ENCODE measurements at regions of chr14 and their contacts with region 1.

Region 1: GRCh38 chr14:84465880-84466279 is 1064.1 kb upstream of the FLRT2 start:
- DNase-seq: peak; percentile 51
- H3K4me3 ChIP-seq: no peak overlapping the region
- H3K27ac ChIP-seq: no peak overlapping the region
- H3K4me1 ChIP-seq: no peaks in the 10 kb centered on the region
- H3K27me3 ChIP-seq: no peaks in the 10 kb centered on the region
- CTCF ChIP-seq: no peak
- POLR2A ChIP-seq: no peak

Region 2: DNA sequence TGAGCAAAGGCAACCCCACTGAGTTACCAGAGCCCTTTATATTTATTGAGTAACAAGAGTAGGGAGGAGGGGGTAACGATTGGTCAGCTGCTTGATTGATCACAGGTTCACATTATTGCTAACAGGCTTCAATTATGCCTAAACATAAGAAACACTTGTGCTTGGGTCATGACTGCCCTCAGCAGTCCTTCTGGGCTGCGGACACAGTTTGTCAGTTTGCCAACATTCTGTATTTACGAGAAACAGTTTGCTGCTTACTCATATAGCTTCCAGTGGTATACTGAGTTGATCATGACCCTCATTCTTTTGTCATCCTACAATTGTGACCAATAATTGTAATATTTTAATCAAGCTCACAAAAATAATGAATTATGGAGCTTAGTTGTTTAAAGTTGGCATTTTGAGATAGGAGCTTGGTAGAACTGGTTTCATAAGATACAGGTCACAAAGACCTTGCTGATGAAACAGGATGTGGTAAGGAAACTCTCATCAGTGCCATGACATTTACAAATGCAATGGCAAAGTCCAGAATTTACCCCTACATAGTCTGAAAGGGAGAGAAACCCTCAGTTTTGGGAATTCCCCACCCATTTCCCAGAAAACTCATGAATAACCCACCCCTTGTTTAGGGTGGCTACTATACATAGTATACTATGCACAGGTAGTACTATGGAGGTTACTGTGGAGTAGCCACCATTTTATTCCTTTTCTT is 357.0 kb before region 1 on chr14:
- CTCF ChIA-PET with region 1: no interaction called
- POLR2A ChIA-PET with region 1: no interaction called
- dilution Hi-C with region 1: no loop called
- intact Hi-C with region 1: loop called (anchors 5 kb)
- DNase-seq: no peak
- H3K4me3 ChIP-seq: no peak overlapping the region
- H3K27ac ChIP-seq: no peak overlapping the region
- H3K4me1 ChIP-seq: peaks cover 20% of the 10 kb centered on the region
- H3K27me3 ChIP-seq: no peaks in the 10 kb centered on the region
- CTCF ChIP-seq: no peak
- POLR2A ChIP-seq: no peak

Region 3: DNA sequence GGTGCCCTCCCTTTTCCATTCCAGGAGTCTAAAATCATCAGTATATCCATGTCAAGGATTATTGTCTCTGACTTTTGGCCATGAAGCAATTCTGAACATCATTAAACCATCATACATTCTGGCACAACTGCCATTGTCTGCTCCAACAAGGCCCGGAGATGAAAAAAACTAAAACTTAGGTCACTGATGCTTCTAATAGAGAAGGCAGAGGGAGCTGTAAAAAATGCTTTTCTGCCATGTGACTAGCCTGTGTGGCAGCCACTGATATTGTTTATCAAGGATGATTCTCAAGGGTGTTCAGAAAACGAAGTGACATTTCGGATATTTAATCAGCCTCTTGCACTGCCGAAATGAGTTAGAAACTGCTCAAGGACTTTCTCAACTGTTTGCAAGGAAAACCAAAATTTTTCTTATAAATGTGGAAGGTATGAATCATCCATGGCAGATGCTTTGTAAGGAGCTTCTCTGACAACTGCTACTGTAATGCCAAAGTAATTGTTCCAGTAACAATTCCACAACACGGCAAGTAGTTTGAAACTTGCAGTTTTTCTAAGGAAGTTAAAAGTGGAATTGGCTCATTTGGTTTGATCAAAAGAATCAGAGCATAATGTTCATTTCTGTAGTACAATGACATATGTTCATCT is 12.5 kb before region 1 on chr14:
- CTCF ChIA-PET with region 1: interaction called, 3 read pairs
- POLR2A ChIA-PET with region 1: no interaction called
- dilution Hi-C with region 1: no loop called
- intact Hi-C with region 1: loop called (anchors 1 kb)
- DNase-seq: no peak
- H3K4me3 ChIP-seq: no peak overlapping the region
- H3K27ac ChIP-seq: no peak overlapping the region
- H3K4me1 ChIP-seq: no peaks in the 10 kb centered on the region
- H3K27me3 ChIP-seq: no peaks in the 10 kb centered on the region
- CTCF ChIP-seq: no peak
- POLR2A ChIP-seq: no peak

Region 4: DNA sequence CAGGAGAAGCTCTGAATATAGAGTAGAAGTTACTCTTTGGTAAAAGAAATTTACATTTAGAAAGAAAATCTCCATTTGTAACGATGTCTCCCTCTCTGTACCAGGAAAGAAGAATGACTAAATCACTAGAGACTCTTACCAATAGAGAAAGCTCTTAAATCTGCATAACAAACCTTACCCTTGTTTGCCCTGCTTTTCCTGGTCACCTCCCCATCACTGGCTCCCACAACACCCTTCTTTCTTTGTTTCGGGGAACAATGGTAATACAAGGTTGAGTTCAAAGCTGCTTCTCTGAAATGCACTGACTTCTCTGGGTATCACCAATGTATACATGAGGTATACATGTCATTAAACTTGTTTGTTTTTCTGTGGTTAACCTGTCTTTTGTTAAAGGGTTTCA is 713.0 kb after region 1 on chr14:
- CTCF ChIA-PET with region 1: no interaction called
- POLR2A ChIA-PET with region 1: no interaction called
- dilution Hi-C with region 1: no loop called
- intact Hi-C with region 1: no loop called
- DNase-seq: no peak
- H3K4me3 ChIP-seq: no peak overlapping the region
- H3K27ac ChIP-seq: no peak overlapping the region
- H3K4me1 ChIP-seq: no peaks in the 10 kb centered on the region
- H3K27me3 ChIP-seq: no peaks in the 10 kb centered on the region
- CTCF ChIP-seq: no peak
- POLR2A ChIP-seq: no peak

Measured in endothelial cell of umbilical vein (primary cell).